Activated CD4-positive, alpha-beta memory T cell treated with anti-CD3 and anti-CD28 coated beads for 36 hours (primary cell): ENCODE measurements at regions of chr13 and their contacts with region 1.

Region 1: GRCh38 chr13:108218044-108218974 is at the start of gene ABHD13:
- DNase-seq: peak; percentile 93
- H3K4me3 Mint-ChIP-seq: peak within 1 kb of the TSS; percentile 89
- H3K27ac Mint-ChIP-seq: peak within 1 kb of the TSS; percentile 92
- H3K4me1 Mint-ChIP-seq: peaks cover 47% of the 10 kb centered on the region
- H3K27me3 Mint-ChIP-seq: no peaks in the 10 kb centered on the region
- total RNA-seq, gene ABHD13: 5.1 to 5.2 TPM

Region 2: DNA sequence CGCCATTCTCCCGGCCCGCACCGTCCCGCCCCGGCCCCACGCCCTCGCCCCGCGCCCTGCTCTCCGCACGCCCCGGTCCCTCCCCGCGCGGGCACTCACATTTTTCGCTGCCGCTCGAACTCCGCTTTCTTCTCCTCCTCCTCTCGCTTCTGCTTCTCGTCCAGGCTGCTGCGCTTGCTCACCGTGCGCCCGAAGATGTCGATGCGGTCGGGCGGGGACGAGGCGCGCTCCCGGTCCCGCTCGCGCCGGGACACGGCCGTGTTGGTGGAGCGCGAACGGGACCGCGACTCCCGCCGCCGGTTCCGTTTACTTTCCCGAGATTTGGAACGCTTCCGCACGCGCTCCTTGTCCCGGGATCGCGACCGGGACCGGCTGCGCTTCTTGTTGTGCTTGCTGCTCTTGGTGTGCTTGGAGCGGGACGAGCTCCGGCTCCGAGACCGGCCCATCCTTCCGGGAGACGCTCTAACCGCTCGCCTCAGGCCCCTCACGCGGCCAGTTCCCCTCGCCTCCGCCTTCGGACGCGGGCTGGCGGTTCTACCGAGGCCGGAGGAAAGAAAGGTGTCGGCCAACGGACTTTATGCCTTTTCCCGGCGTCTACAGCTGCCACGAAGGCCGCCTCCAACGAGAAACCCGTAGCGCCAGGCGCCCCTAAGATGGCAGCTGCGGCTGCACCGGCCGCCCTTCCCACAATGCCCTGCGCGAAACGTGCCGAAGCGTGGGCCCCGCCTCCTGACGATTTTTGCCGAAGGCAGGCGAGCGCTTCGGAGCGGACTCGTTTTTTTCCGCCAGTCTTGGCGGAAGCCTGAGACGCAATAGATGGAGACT is 1650.6 kb before region 1 on chr13 and contains the start of gene ARGLU1:
- CTCF ChIA-PET with region 1: no interaction called
- POLR2A ChIA-PET with region 1: no interaction called
- intact Hi-C with region 1: loop called (anchors 2 kb)
- DNase-seq: peak; percentile 97
- H3K4me3 Mint-ChIP-seq: peak within 1 kb of the TSS; percentile 98
- H3K27ac Mint-ChIP-seq: peak within 1 kb of the TSS; percentile 97
- H3K4me1 Mint-ChIP-seq: peaks cover 48% of the 10 kb centered on the region
- H3K27me3 Mint-ChIP-seq: no peaks in the 10 kb centered on the region
- total RNA-seq, gene ARGLU1: 81.0 to 87.1 TPM

Region 3: DNA sequence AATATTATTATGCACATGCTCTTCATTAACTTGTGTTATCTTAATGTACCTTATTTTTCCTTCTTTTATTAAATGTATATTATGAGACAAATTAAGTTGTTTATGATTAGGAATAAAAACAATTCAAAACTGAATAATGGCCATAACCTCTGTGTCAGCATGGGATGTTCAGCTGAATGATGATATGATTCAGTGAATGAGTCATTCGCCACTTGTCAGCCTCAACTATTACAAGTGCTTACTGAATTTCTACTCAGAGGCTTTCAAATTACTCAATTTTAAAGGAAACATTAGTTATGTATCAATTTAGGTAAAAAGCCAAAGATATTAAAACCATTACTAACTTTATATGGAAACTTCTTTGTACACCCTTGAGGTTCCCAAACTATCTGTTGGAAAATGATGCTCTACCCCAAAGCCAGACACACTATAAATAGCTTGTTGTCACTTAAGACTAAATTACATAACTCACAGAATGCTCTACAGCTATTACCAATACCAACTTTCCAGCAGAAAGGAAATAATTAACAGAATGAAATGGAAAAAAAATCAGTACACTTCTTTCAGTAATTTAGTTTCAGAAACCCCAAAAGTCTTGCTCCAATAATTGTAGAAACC is 17.4 kb before region 1 on chr13:
- CTCF ChIA-PET with region 1: interaction called, 3 read pairs
- POLR2A ChIA-PET with region 1: interaction called, 3 read pairs
- intact Hi-C with region 1: loop called (anchors 2 kb)
- DNase-seq: no peak
- H3K4me3 Mint-ChIP-seq: no peak overlapping the region
- H3K27ac Mint-ChIP-seq: no peak overlapping the region
- H3K4me1 Mint-ChIP-seq: peaks cover 21% of the 10 kb centered on the region
- H3K27me3 Mint-ChIP-seq: peaks cover 27% of the 10 kb centered on the region

Region 4: DNA sequence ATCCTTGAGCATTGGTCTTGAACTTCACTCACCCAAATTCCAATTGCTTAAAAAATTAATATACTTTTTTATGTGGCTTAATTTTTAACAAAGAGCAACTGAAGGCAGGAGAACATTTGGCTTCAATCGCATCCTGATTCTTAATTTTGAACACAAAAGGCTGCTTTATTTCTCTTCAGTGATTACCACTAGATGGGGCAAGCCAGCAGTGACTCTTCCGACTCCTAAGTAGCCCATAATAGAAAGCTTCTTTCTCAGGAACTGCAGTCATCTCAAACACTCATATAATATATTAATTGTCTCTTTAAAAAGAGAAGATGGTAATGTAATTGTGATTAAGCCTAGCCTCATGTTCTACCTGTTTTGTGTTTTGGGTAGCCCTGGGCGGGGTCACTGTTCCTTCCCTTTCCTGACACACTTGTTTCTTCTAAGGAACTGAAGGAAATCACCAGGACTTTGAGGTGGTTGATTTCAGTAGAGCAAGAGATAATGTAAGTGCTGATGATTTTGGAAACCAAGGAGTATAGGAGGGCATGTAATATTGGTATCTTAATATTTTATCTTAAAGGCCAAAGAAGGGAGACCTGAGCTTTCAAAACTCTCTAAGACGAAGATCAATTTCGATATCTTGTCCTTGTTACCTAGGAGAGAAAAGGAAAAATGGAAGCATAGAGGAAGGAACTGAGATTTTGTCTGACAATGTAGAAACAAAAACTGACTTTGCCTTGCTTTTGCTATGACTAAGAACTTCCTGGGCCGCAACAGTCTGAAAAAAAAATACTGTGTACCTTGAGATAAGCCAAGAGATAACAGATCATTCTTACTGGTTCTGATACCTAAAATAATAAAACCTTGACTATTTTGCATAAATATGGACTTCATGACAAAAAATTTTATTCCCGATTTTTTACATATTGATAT is 124.3 kb after region 1 on chr13:
- CTCF ChIA-PET with region 1: no interaction called
- POLR2A ChIA-PET with region 1: no interaction called
- intact Hi-C with region 1: loop called (anchors 2 kb)
- DNase-seq: peak; percentile 16
- H3K4me3 Mint-ChIP-seq: peak overlapping the region; percentile 49
- H3K27ac Mint-ChIP-seq: peak overlapping the region; percentile 68
- H3K4me1 Mint-ChIP-seq: peaks cover 43% of the 10 kb centered on the region
- H3K27me3 Mint-ChIP-seq: no peaks in the 10 kb centered on the region

Region 5: DNA sequence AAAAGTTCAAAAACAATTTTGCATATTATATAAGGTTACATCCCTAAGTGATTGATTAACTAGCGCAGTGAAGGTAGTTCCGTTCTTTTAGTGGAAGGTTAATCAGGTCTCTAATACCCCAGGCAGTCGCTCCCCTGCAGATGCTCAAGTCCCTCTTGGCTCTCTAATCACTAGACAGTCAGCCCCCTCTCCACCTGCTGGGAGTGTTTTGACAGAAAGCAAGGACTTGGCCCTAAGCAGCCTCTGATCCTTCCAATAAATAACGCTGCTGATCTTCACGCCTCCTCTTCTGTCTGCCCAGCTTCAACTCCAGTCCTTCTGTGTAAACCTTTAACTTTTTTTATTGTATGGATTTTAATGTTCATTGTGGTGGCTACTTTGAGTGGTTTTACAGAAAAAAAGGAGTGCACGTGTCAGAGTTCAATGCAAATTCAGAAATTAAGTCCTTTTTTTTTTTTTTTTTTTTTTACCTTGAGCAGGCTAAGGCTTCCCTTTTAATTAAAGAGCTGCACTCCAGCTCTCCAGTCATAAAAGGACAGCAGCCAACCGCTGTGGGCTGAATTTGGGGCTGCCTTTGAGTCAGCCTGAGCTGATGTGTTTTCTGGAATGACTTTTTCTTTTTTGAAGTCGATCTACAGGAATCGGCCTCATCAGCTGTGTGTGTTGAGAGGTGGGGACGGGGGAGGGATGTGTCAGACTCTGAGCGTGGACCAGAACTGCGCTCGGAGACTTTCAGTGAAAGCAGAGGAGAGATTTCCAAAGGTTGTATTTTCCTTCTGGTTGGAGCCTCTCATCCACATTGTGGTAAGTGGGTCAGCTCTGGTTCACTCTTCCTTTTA is 377.3 kb after region 1 on chr13:
- CTCF ChIA-PET with region 1: no interaction called
- POLR2A ChIA-PET with region 1: no interaction called
- intact Hi-C with region 1: loop called (anchors 5 kb)
- DNase-seq: peak; percentile 82
- H3K4me3 Mint-ChIP-seq: no peak overlapping the region
- H3K27ac Mint-ChIP-seq: no peak overlapping the region
- H3K4me1 Mint-ChIP-seq: peaks cover 16% of the 10 kb centered on the region
- H3K27me3 Mint-ChIP-seq: peaks cover 10% of the 10 kb centered on the region